Activated T-helper 2 cell treated with anti-CD3 and anti-CD28 coated beads, Interferon-gamma antibody, Interleukin-2, Interleukin-4, amounts not matched to agents 10 μg/mL and 5 μg/mL and 100 μg/mL, durations not matched to agents 14 hours and 24 hours and 36 hours (primary cell): ENCODE measurements at regions of chr4 and their contacts with region 1.

Region 1: GRCh38 chr4:70839589-70840093 is at the start of gene GRSF1:
- DNase-seq: peak; percentile 91
- H3K4me3 Mint-ChIP-seq: peak within 1 kb of the TSS; percentile 92
- H3K27ac Mint-ChIP-seq: peak within 1 kb of the TSS; percentile 96
- H3K4me1 Mint-ChIP-seq: peaks cover 45% of the 10 kb centered on the region
- H3K27me3 Mint-ChIP-seq: no peaks in the 10 kb centered on the region
- total RNA-seq, gene GRSF1: 120 and 121 TPM in 2 replicates

Region 2: GRCh38 chr4:70704331-70705145 is 135.1 kb before region 1 on chr4:
- intact Hi-C with region 1: loop called (anchors 2 kb)
- DNase-seq: peak; percentile 40
- H3K4me3 Mint-ChIP-seq: peak overlapping the region; percentile 84
- H3K27ac Mint-ChIP-seq: peak overlapping the region; percentile 81
- H3K4me1 Mint-ChIP-seq: peaks cover 27% of the 10 kb centered on the region
- H3K27me3 Mint-ChIP-seq: no peaks in the 10 kb centered on the region

Region 3: DNA sequence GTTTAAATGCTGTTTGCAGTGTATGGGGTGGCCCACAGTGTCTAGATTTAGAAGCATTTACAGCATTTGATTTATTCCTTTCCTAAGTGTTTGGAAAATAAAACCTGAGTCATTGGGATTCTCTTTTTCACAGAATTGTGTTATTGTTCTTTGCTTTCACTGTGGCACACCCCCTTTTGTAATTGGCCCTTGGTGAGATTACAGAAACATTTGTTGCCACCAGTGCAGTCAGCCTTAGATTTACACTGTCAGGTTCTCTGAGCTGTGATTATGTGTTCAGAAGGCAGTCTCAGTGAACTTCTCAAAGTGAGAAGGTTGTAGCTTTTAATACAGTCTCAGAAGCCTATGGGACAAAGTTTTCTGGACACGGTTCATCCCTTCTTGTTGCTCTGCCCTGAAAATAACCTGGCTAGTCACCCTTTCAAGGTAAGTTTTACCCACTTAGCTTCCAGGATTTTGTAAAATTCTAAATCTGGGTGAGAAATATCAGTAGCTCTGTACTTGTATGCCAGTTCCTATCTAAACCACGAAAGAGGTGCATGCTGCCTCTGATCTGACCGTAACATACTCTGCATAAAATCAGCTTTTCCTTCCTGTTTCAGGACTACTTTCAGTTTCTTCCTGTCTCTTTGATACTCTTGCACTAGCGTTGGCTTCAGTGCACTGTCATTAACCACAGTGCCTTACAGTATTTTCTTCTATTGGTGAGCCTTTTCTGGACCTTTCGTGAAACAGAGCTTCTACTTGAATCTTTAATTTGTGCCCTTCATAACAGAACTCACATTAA is 105.3 kb before region 1 on chr4:
- intact Hi-C with region 1: loop called (anchors 5 kb)
- DNase-seq: peak; percentile 41
- H3K4me3 Mint-ChIP-seq: peak overlapping the region; percentile 74
- H3K27ac Mint-ChIP-seq: peak overlapping the region; percentile 79
- H3K4me1 Mint-ChIP-seq: peaks cover 40% of the 10 kb centered on the region
- H3K27me3 Mint-ChIP-seq: no peaks in the 10 kb centered on the region

Region 4: DNA sequence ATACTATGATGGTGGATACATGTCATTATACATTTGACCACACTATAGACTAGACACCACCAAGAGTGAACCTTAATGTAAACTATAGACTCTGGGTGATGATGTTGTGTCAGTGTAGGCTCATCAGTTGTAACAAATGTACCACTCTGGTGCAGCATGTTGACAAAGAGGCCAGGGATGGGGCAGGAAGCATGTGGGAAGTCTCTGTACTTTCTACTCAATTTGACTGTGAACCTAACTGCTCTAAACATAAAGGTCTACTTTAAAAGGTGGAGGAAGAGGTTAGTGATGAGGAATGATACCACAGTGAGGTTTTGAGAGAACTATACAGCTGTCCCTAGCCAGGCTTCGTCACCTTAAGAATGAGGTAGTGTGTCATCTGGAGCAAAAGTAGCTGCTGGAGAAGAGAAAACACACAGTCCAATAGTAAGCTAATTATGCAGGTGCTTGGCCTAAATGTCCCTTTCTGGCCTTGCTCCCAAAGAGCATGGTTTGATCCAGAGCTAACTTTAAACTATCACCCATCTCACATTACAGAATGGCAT is 38.3 kb before region 1 on chr4:
- intact Hi-C with region 1: loop called (anchors 1 kb)
- DNase-seq: no peak
- H3K4me3 Mint-ChIP-seq: no peak overlapping the region
- H3K27ac Mint-ChIP-seq: peak overlapping the region; percentile 59
- H3K4me1 Mint-ChIP-seq: peaks cover 20% of the 10 kb centered on the region
- H3K27me3 Mint-ChIP-seq: no peaks in the 10 kb centered on the region

Region 5: GRCh38 chr4:70863099-70863790 is 23.6 kb after region 1 on chr4:
- intact Hi-C with region 1: loop called (anchors 1 kb)
- DNase-seq: no peak
- H3K4me3 Mint-ChIP-seq: no peak overlapping the region
- H3K27ac Mint-ChIP-seq: peak overlapping the region; percentile 59
- H3K4me1 Mint-ChIP-seq: peaks cover 10% of the 10 kb centered on the region
- H3K27me3 Mint-ChIP-seq: no peaks in the 10 kb centered on the region

Region 6: DNA sequence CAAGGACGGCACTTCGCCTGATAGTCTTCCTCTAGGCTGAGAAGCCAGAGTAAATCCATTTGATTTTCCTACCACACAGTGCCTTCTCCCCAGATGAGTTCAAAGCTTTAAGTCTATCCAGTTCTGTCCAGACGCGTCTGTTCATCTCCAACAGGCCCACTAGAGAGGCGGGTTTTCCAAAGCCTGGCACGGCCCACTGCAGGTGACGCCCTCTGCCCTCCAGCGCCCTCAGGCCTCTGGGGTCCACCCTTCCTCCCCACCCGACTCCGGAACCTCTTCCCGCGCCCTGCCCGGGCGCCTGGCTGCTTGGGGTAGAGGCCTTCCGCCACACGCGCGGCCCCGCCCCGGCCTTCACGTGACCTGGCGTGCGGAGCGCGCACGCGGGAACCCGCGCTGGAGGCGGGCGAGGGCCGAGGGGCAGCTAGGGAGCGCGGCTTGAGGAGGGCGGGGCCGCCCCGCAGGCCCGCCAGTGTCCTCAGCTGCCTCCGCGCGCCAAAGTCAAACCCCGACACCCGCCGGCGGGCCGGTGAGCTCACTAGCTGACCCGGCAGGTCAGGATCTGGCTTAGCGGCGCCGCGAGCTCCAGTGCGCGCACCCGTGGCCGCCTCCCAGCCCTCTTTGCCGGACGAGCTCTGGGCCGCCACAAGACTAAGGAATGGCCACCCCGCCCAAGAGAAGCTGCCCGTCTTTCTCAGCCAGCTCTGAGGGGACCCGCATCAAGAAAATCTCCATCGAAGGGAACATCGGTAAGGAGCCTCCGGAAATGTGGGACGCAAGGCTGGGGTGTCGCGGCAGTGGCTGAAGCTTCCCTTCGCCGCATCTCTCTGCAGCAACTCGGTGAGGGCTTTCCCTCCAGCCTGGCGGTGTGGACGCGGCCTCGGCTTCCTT is 153.8 kb after region 1 on chr4 and contains the start of gene DCK:
- intact Hi-C with region 1: loop called (anchors 1 kb)
- DNase-seq: peak; percentile 83
- H3K4me3 Mint-ChIP-seq: peak within 1 kb of the TSS; percentile 99
- H3K27ac Mint-ChIP-seq: peak within 1 kb of the TSS; percentile 93
- H3K4me1 Mint-ChIP-seq: peaks cover 39% of the 10 kb centered on the region
- H3K27me3 Mint-ChIP-seq: no peaks in the 10 kb centered on the region
- total RNA-seq, gene DCK: 35.1 and 35.3 TPM in 2 replicates